ENCODE measurements at regions of chr13 and their contacts with region 1.

Region 1: DNA sequence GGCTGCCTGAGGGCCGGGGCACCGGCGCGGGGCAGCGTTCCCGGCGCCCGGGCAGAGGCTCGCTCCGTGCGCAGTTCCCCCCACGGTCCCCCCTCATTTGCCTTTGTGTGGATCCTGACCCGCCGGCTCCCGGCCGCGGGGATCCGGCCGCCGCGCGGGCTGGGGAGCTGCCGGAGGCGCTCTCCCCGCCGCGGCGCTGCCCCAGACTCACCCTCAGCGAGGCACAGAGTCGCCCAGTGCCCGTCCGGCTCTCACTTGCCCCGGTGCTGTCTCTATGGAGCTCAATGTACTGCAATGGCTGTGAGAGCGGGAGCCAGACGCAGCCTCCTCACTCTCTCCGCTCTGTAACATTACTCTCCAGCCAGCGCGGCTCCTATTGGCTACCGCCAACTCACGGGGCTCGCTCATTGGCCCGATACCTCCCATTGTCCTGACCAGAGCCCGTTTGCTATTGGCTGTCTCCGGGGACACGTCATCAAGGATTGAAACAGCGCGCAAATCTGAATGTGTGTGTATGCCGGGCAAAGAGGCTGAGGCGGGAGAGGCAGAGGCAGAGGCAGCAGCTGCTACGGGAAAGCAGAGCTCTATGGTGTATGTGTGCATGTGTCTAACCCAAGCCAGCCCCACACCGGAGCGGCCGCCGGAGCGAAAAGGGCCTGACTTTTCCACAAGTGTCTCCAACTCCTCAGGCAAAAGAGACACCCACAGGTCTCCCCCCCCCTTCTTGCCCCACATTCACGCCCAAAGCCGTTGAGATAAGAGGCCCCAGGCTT is at the start of gene HMGB1:
- DNase-seq: peak; percentile 98 to 99
- ATAC-seq: peak; percentile 95 to 97 (median 96)
- H3K4me3 ChIP-seq: peak within 1 kb of the TSS; percentile 96
- H3K27ac ChIP-seq: peak within 1 kb of the TSS; percentile 99
- H3K4me1 ChIP-seq: peaks cover 27% of the 10 kb centered on the region
- H3K27me3 ChIP-seq: no peaks in the 10 kb centered on the region
- CTCF ChIP-seq: no peak
- total RNA-seq, gene HMGB1: 126 to 216 (median 187) TPM

Region 2: DNA sequence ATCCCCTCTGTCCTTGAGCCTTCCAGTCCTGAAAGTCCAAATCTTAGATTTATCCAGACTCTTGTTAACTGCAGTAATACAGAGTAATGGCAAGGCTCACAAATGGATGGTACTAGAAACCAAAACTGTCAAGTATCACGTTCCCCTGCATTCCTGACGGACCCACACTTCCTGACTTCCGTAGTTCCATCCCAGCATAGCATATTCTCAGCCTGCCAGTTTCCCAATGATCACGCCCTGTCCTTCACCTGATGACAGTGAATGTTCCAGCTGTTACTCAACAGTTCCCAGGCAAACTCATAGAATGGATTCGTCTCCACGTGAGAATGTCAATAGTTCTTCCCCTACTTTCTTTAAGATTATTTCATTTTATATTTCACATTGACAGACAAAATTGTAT is 903.9 kb before region 1 on chr13:
- intact Hi-C with region 1: no loop called
- DNase-seq: no peak
- ATAC-seq: no peak
- H3K4me3 ChIP-seq: no peak overlapping the region
- H3K27ac ChIP-seq: no peak overlapping the region
- H3K4me1 ChIP-seq: no peaks in the 10 kb centered on the region
- H3K27me3 ChIP-seq: no peaks in the 10 kb centered on the region
- CTCF ChIP-seq: no peak

Region 3: DNA sequence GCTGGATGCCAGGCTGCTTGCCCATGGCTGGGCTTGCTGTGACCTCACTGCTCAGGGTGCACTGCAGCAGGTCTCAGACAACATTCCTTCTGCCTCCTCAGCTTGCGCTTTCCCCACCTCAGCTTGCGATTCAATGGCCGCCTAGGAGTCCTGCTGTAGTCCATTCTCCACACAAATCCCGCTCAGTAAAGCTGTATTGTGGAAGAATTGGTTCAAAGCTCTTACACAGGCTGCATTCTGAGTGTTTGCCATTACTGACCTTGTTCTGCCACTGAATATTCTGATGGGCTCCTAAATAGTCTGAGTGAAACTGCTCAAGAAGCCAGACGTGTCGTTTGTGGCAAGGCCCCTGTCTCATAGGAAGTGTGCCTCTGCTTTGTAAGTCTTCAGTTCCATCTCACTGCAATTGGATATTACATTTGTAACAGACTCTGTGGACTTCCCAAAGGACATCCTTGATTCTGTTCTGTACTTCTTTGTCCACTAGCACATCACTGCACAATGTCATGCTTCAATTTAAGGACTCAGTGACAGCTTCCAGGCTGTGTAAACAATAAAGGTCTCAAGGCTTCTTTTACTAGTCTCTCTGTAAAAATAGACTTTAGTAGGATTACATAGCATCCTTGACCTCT is 208.2 kb before region 1 on chr13:
- intact Hi-C with region 1: loop called in 1 of 2 experiments (anchors 5 kb)
- DNase-seq: no peak
- ATAC-seq: no peak
- H3K4me3 ChIP-seq: no peak overlapping the region
- H3K27ac ChIP-seq: no peak overlapping the region
- H3K4me1 ChIP-seq: no peaks in the 10 kb centered on the region
- H3K27me3 ChIP-seq: no peaks in the 10 kb centered on the region
- CTCF ChIP-seq: no peak

Region 4: GRCh38 chr13:30408319-30409101 is 57.3 kb before region 1 on chr13:
- intact Hi-C with region 1: loop called in 1 of 2 experiments (anchors 1 kb)
- DNase-seq: peak; percentile 97 to 98
- ATAC-seq: peak; percentile 95 to 97 (median 96)
- H3K4me3 ChIP-seq: peak overlapping the region; percentile 65
- H3K27ac ChIP-seq: peak overlapping the region; percentile 85
- H3K4me1 ChIP-seq: peaks cover 5% of the 10 kb centered on the region
- H3K27me3 ChIP-seq: no peaks in the 10 kb centered on the region
- CTCF ChIP-seq: peak; percentile 78

Region 5: DNA sequence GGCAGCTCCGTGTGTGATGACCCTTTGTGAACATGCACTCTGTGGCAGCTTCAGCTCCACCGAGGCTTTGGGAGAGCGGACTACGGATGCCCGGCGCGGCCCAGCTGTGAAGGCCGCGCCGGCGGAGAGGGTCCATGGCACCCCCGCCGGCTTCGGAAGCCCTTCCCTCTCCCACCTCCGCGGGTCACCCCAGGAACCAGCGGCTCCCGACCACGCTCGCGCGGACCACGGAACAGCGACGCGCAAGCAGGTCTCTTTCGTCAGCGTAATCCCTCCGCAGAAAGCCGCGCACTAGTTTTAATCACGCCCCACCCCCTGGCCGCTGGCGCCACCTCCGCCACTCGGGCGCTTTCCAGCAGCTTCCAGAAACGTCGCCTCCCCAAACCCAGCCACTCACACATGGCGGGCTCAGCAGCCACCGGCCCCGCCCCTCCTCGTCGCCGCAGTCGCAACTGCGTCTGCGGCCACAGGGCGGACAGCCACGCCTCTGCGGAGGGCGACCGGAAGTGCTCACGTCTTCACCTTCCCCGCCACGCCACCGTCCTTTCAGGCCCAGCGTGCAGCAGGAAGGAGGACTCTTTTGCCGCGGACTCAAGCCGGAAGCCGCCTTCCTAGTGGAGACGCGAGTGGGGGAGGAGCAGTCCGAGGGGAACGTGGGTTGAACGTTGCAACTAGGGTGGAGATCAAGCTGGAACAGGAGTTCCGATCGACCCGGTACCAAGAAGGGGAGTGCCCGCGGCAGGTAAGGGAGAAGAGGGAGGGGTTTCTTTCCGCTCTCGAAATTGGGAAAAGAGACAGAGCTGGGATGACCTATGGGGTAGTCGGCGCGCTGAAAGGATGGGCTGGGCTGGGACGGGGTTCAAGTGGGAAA is 151.8 kb after region 1 on chr13 and contains the start of gene USPL1:
- intact Hi-C with region 1: loop called (anchors 1 to 10 kb)
- DNase-seq: peak; percentile 99
- ATAC-seq: peak; percentile 92 to 97 (median 94)
- H3K4me3 ChIP-seq: peak within 1 kb of the TSS; percentile 88
- H3K27ac ChIP-seq: peak within 1 kb of the TSS; percentile 98
- H3K4me1 ChIP-seq: peaks cover 30% of the 10 kb centered on the region
- H3K27me3 ChIP-seq: no peaks in the 10 kb centered on the region
- CTCF ChIP-seq: peak; percentile 25
- total RNA-seq, gene USPL1: 11.2 to 18.4 (median 13.1) TPM

Region 6: GRCh38 chr13:30898678-30899241 is 433.0 kb after region 1 on chr13:
- intact Hi-C with region 1: no loop called
- DNase-seq: peak in 1 of 2 donors; percentile 54
- ATAC-seq: peak in 3 of 4 donors; percentile 55 to 63 (median 62)
- H3K4me3 ChIP-seq: no peak overlapping the region
- H3K27ac ChIP-seq: no peak overlapping the region
- H3K4me1 ChIP-seq: no peaks in the 10 kb centered on the region
- H3K27me3 ChIP-seq: peaks cover 0 to 6% (median 4%) of the 10 kb centered on the region in 3 donors
- CTCF ChIP-seq: no peak

Measured in psoas muscle (tissue), 8 donors.